HEK293 (cell line): ENCODE measurements at regions of chr12 and their contacts with region 1.

Region 1: GRCh38 chr12:12654691-12655460 is 41.1 kb downstream of the GPR19 start:
- H3K4me3 ChIP-seq: no peak overlapping the region
- H3K27ac ChIP-seq: no peak overlapping the region
- H3K4me1 ChIP-seq: no peaks in the 10 kb centered on the region
- CTCF ChIP-seq: no peak

Region 2: GRCh38 chr12:12642916-12643315 is 12.0 kb before region 1 on chr12:
- CTCF ChIA-PET with region 1: interaction called, 11 read pairs
- POLR2A ChIA-PET with region 1: no interaction called
- H3K4me3 ChIP-seq: no peak overlapping the region
- H3K27ac ChIP-seq: no peak overlapping the region
- H3K4me1 ChIP-seq: no peaks in the 10 kb centered on the region
- CTCF ChIP-seq: no peak